Cardiac septum (tissue), 1 donor: ENCODE measurements at regions of chr17 and their contacts with region 1.

Region 1: DNA sequence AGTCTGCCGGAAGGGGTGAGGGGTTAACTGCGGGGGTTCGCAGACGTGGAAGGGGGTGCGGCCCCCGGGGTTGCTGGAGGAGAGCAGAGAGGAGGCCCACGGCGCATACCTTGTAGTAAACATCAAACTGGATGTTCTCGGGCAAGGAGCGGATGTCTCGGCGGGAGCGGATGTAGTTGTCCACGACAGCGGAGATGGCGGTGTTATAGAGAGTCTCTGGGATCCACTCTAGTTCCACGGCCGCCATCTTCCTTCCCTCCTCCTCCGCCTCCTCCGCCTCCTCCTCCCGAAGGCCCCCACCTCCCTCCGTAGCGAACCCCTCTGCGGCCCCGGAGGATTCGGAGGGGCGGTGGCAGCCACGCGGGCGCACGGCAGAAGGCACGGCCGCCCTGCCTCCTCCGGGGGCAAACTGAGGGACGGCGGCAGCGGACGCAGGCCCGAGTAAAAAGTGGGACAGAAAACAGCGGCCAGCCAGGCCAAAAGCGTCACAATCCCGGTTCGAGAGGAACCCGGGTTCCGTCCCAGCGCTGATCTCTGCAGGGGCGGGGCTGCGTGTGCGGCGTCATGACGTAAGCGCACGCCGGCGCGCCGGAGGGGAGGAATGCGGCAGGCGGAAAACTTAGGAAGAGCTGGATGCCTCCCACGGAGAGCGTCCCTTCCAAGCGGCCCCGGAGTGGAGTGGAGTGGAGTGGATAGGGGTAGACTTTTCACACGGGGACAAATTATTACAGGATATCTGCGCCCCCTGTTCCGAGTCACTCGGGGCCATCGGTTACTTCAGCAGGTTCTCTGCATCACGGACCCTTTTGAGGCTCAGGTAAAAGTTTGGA is at the start of gene APPBP2:
- DNase-seq: peak; percentile 95
- total RNA-seq, gene APPBP2: 19.9 TPM

Region 2: GRCh38 chr17:60036796-60037612 is 488.9 kb before region 1 on chr17:
- intact Hi-C with region 1: no loop called
- DNase-seq: peak; percentile 79

Region 3: DNA sequence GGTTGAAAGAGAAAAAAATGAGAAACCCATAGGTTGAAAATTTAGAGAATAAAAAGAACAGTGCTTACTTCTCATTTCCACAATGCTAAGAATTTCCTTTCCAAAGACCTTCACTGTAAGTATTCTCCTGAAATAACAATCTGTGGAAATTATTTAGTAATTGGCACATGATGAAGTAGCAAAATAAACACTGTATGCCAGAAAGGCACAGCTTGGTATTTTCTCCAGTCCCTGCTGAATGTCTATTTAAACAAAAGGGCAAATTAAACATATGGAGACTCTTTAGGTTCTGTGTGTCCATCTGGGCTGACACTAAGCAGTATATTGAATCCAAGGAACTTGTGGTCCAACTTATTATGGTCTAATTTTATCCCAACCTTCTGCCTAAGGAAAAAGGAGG is 57.5 kb before region 1 on chr17:
- intact Hi-C with region 1: loop called (anchors 5 kb)
- DNase-seq: no peak

Region 4: GRCh38 chr17:60577147-60577915 is 51.4 kb after region 1 on chr17:
- intact Hi-C with region 1: loop called (anchors 10 kb)
- DNase-seq: no peak

Region 5: DNA sequence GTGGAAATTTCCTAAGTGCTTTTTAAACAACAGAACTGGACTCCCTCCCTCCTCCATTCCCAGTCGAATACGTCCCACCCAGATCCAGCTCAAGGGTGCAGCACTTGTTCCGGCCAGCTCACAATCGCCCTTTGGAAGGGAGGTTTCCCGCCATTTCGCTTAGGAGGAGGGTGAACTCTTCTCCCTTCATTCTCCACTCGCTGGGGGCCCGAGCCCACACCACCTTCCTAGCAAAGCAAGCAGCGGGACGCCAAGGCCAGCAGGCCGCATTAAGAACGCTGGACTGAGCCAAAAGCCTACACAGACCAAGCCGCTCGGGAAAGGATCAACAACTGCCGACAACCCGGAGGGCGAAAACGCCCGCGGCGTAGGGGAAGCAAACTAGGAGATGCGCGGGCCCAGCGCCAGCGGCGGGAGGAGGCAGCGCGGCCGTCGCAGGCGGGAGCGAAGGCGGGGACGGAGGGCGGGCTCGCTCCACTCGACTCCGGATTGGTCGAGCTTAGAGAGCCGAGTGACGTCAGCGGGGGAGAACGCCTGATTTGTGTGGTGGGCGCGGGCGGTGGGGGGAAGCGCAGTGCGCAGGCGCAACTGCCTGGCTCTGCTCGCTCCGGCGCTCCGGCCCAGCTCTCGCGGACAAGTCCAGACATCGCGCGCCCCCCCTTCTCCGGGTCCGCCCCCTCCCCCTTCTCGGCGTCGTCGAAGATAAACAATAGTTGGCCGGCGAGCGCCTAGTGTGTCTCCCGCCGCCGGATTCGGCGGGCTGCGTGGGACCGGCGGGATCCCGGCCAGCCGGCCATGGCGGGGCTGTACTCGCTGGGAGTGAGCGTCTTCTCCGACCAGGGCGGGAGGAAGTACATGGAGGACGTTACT is 74.0 kb after region 1 on chr17 and contains the start of gene PPM1D:
- intact Hi-C with region 1: loop called (anchors 2 kb)
- DNase-seq: peak; percentile 99
- total RNA-seq, gene PPM1D: 6.2 TPM